GM12878 (cell line): ENCODE measurements at regions of chr3 and their contacts with region 1.

Region 1: GRCh38 chr3:27253831-27254230 is 115.4 kb downstream of the NEK10 start:
- DNase-seq: peak; percentile 1
- ATAC-seq: peak; percentile 97
- H3K4me3 ChIP-seq: no peak overlapping the region
- H3K27ac ChIP-seq: no peak overlapping the region
- H3K4me1 ChIP-seq: no peaks in the 10 kb centered on the region
- H3K27me3 ChIP-seq: no peaks in the 10 kb centered on the region
- CTCF ChIP-seq: peak; percentile 45 to 54 (median 52); a peak in 5 of 6 replicates
- EP300 ChIP-seq: no peak
- POLR2A ChIP-seq: no peak
- RAD21 ChIP-seq: peak; percentile 65

Region 2: GRCh38 chr3:27031476-27031875 is 222.4 kb before region 1 on chr3:
- CTCF ChIA-PET with region 1: no interaction called
- POLR2A ChIA-PET with region 1: no interaction called
- RAD21 ChIA-PET with region 1: no interaction called
- SMC1A ChIA-PET with region 1: no interaction called
- in situ Hi-C with region 1: no loop called
- intact Hi-C with region 1: no loop called
- DNase-seq: no peak
- ATAC-seq: no peak
- H3K4me3 ChIP-seq: no peak overlapping the region
- H3K27ac ChIP-seq: no peak overlapping the region
- H3K4me1 ChIP-seq: no peaks in the 10 kb centered on the region
- H3K27me3 ChIP-seq: no peaks in the 10 kb centered on the region
- CTCF ChIP-seq: no peak
- EP300 ChIP-seq: no peak
- POLR2A ChIP-seq: no peak
- RAD21 ChIP-seq: no peak

Region 3: DNA sequence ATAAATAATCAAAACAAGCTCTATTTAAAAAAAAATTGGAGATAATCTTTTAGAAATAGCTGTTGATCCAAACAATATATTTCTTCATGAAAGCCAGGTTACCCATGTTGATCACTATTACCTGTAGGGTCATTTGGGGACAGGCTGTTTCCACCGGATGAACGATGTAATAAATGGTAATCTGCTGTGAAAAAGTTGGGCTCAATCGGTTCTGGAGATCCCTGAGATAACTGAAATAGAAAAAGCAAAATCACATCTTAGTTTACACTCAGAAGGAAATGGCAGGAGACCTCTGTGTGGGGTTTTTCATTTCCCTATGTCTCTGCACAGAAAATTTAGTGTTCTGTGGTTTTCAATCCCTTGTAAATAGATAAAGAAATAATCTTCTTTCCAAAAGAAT is 134.2 kb before region 1 on chr3:
- CTCF ChIA-PET with region 1: no interaction called
- POLR2A ChIA-PET with region 1: no interaction called
- RAD21 ChIA-PET with region 1: no interaction called
- SMC1A ChIA-PET with region 1: no interaction called
- in situ Hi-C with region 1: no loop called
- intact Hi-C with region 1: no loop called
- DNase-seq: no peak
- ATAC-seq: no peak
- H3K4me3 ChIP-seq: no peak overlapping the region
- H3K27ac ChIP-seq: no peak overlapping the region
- H3K4me1 ChIP-seq: no peaks in the 10 kb centered on the region
- H3K27me3 ChIP-seq: no peaks in the 10 kb centered on the region; a peak in 1 of 4 replicates
- CTCF ChIP-seq: no peak
- EP300 ChIP-seq: no peak
- POLR2A ChIP-seq: no peak
- RAD21 ChIP-seq: no peak

Region 4: GRCh38 chr3:27141668-27142067 is 112.2 kb before region 1 on chr3:
- CTCF ChIA-PET with region 1: interaction called, 20 read pairs
- POLR2A ChIA-PET with region 1: no interaction called
- RAD21 ChIA-PET with region 1: interaction called, 4 read pairs
- SMC1A ChIA-PET with region 1: interaction called, 3 read pairs
- in situ Hi-C with region 1: no loop called
- intact Hi-C with region 1: no loop called
- DNase-seq: no peak
- ATAC-seq: no peak
- H3K4me3 ChIP-seq: no peak overlapping the region
- H3K27ac ChIP-seq: no peak overlapping the region
- H3K4me1 ChIP-seq: no peaks in the 10 kb centered on the region
- H3K27me3 ChIP-seq: no peaks in the 10 kb centered on the region
- CTCF ChIP-seq: 0 out of 6 replicates have a peak, but pooled peaks of 1 of the 3 experiments have one; percentile 3
- EP300 ChIP-seq: no peak
- POLR2A ChIP-seq: no peak
- RAD21 ChIP-seq: no peak

Region 5: DNA sequence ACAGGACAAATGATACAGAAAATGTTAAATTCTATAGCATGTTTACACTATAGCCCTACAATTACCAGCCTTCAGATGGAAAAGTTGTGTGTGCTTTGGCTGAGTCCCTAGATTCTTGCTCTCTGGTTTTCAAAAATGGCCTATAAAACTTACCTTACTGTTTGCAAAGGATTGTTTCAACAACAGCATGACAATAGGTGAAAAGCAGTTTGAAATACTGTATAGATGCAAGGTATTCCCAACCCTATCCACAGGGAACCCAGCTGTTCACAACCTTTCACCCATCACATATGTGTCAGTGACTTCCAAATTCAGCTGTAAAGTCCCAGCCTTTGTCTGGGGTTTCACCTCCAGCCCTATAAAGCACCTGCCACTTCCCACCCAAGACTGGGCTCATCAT is 18.1 kb after region 1 on chr3:
- CTCF ChIA-PET with region 1: interaction called, 11 read pairs
- POLR2A ChIA-PET with region 1: no interaction called
- RAD21 ChIA-PET with region 1: interaction called, 3 read pairs
- SMC1A ChIA-PET with region 1: interaction called, 3 read pairs
- in situ Hi-C with region 1: no loop called
- intact Hi-C with region 1: no loop called
- DNase-seq: no peak
- ATAC-seq: no peak
- H3K4me3 ChIP-seq: no peak overlapping the region
- H3K27ac ChIP-seq: no peak overlapping the region
- H3K4me1 ChIP-seq: no peaks in the 10 kb centered on the region
- H3K27me3 ChIP-seq: no peaks in the 10 kb centered on the region
- CTCF ChIP-seq: no peak
- EP300 ChIP-seq: no peak
- POLR2A ChIP-seq: no peak
- RAD21 ChIP-seq: no peak